ENCODE measurements at regions of chr7 and their contacts with region 1.

Region 1: GRCh38 chr7:99910976-99911375 is 8.4 kb downstream of the TRIM4 start:
- DNase-seq: no peak
- ATAC-seq: no peak
- H3K4me3 ChIP-seq: no peak overlapping the region
- H3K4me3 Mint-ChIP-seq: no peak overlapping the region
- H3K27ac ChIP-seq: no peak overlapping the region
- H3K27ac Mint-ChIP-seq: no peak overlapping the region
- H3K4me1 ChIP-seq: peaks cover 13% of the 10 kb centered on the region
- H3K4me1 Mint-ChIP-seq: peaks cover 67% of the 10 kb centered on the region
- H3K27me3 ChIP-seq: no peaks in the 10 kb centered on the region
- H3K27me3 Mint-ChIP-seq: no peaks in the 10 kb centered on the region
- CTCF ChIP-seq: no peak

Region 2: GRCh38 chr7:99881370-99881769 is 29.6 kb before region 1 on chr7:
- CTCF ChIA-PET with region 1: no interaction called
- POLR2A ChIA-PET with region 1: no interaction called
- intact Hi-C with region 1: no loop called
- DNase-seq: no peak
- ATAC-seq: no peak
- H3K4me3 ChIP-seq: no peak overlapping the region
- H3K4me3 Mint-ChIP-seq: no peak overlapping the region
- H3K27ac ChIP-seq: no peak overlapping the region
- H3K27ac Mint-ChIP-seq: no peak overlapping the region
- H3K4me1 ChIP-seq: no peaks in the 10 kb centered on the region
- H3K4me1 Mint-ChIP-seq: no peaks in the 10 kb centered on the region
- H3K27me3 ChIP-seq: no peaks in the 10 kb centered on the region
- H3K27me3 Mint-ChIP-seq: no peaks in the 10 kb centered on the region
- CTCF ChIP-seq: no peak

Region 3: DNA sequence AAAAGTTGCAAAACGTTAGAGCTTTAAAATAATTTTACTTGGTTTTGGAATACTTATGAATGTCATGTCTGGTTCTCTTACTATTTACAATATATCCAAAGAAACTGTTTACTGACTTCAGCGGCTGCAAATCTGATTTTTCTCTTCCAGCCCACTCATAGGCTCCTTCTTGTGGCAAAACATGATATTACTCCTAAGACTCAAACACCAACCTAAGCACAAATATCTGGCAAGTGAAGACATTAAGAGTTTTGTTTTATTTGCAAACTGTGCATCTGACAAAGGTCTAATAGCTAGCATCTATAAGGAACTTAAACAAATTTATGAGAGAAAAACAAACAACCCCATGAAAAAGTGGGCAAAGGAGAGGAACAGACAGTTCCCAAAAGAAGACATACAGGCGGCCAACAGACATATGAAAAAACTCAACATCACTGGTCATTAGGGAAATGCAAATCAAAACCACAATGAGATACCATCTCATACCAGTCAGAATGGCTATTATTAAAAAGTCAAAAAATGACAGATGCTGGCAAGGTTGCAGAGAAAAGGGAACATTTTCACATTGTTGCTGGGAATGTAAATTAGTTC is 38.8 kb after region 1 on chr7:
- CTCF ChIA-PET with region 1: interaction called, 3 read pairs
- POLR2A ChIA-PET with region 1: no interaction called
- intact Hi-C with region 1: loop called (anchors 1 kb)
- DNase-seq: peak in 3 of 14 experiments; percentile 20 to 40 (median 35)
- ATAC-seq: peak; percentile 52
- H3K4me3 ChIP-seq: no peak overlapping the region
- H3K4me3 Mint-ChIP-seq: no peak overlapping the region
- H3K27ac ChIP-seq: no peak overlapping the region
- H3K27ac Mint-ChIP-seq: no peak overlapping the region
- H3K4me1 ChIP-seq: no peaks in the 10 kb centered on the region
- H3K4me1 Mint-ChIP-seq: no peaks in the 10 kb centered on the region
- H3K27me3 ChIP-seq: no peaks in the 10 kb centered on the region
- H3K27me3 Mint-ChIP-seq: peaks cover 12% of the 10 kb centered on the region
- CTCF ChIP-seq: peak; percentile 49

Region 4: GRCh38 chr7:99990460-99990852 is 79.5 kb after region 1 on chr7:
- CTCF ChIA-PET with region 1: interaction called, 14 read pairs
- POLR2A ChIA-PET with region 1: interaction called, 3 read pairs
- intact Hi-C with region 1: loop called (anchors 1 kb)
- DNase-seq: no peak
- ATAC-seq: no peak
- H3K4me3 ChIP-seq: no peak overlapping the region
- H3K4me3 Mint-ChIP-seq: no peak overlapping the region
- H3K27ac ChIP-seq: no peak overlapping the region
- H3K27ac Mint-ChIP-seq: no peak overlapping the region
- H3K4me1 ChIP-seq: peaks cover 12% of the 10 kb centered on the region
- H3K4me1 Mint-ChIP-seq: peaks cover 5% of the 10 kb centered on the region
- H3K27me3 ChIP-seq: no peaks in the 10 kb centered on the region
- H3K27me3 Mint-ChIP-seq: no peaks in the 10 kb centered on the region
- CTCF ChIP-seq: no peak

Measured in CD4-positive, alpha-beta T cell (primary cell).